Activated CD4-positive, alpha-beta memory T cell treated with anti-CD3 and anti-CD28 coated beads for 36 hours (primary cell): ENCODE measurements at regions of chr14 and their contacts with region 1.

Region 1: DNA sequence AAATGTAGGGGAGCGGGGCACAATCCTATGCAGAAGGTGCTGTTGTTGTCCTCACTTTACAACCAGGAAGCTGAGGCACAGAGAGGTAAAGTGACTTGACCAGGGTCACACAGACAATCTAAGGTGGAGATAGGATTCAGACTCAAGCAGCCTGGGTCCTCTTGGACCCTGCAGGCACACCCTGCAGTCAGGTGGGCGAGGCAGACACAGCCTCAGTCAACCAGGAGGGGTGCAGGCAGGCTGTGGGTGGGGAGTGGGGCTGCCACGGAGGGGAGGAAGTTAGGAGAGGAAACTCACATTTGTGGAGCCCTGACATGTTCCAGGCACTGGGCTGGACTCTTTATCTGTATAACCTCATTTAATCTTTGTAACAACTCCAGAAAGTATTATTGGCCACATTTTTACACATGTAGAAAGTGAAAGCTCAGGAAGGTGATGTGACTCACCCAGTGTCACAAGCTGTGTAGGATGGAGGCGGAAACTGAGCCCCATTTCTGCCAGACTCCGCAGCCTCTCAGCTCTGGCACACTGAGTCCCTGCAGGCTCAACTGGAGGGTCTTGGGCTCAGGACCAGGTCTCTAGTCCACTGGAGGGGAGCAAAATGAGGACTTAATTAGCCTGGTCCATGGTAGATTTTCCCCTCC is 24.9 kb upstream of the CHGA start:
- DNase-seq: peak; percentile 73
- H3K4me3 Mint-ChIP-seq: peak overlapping the region; percentile 45
- H3K27ac Mint-ChIP-seq: no peak overlapping the region
- H3K4me1 Mint-ChIP-seq: peaks cover 31% of the 10 kb centered on the region
- H3K27me3 Mint-ChIP-seq: peaks cover 12% of the 10 kb centered on the region

Region 2: GRCh38 chr14:92846162-92846897 is 51.7 kb before region 1 on chr14:
- CTCF ChIA-PET with region 1: no interaction called
- POLR2A ChIA-PET with region 1: no interaction called
- intact Hi-C with region 1: loop called (anchors 1 kb)
- DNase-seq: peak; percentile 63
- H3K4me3 Mint-ChIP-seq: no peak overlapping the region
- H3K27ac Mint-ChIP-seq: peak overlapping the region; percentile 58
- H3K4me1 Mint-ChIP-seq: peaks cover 65% of the 10 kb centered on the region
- H3K27me3 Mint-ChIP-seq: no peaks in the 10 kb centered on the region

Region 3: DNA sequence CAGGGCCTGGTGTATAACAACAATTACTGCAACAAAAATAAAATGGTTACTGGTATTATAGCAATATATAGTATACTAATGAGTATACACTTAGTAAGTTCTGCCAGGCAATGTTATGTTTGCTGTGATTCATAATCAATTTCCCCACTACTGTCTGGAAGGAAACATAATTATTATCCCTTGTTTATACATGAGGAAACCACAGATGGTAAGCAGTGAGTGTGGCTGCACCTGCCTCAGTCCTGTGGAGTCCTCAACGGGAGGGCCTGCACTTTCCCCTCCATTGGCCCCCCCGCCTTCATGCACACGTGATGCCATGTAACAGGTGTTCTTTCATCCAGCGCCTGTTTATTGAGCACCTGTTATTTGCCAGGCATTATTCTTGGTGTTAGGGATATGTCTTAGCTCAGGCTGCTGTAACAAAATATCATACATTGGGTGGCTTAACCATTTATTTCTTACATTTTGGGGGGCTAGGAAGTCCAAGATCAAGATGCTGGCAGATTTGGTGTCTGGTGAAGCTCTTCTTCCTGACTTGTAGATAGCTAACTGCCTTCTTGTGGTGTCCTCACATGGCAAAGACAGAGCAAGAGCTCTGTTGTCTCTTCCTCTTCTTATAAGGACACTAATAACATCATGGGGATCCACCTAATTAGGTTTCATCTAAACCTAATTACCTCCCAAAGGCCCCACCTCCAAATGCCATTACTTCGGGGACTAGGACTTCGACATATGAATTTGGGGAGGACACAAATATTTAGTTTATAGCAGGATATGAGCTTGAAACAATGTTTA is 34.6 kb before region 1 on chr14:
- CTCF ChIA-PET with region 1: no interaction called
- POLR2A ChIA-PET with region 1: no interaction called
- intact Hi-C with region 1: no loop called
- DNase-seq: no peak
- H3K4me3 Mint-ChIP-seq: no peak overlapping the region
- H3K27ac Mint-ChIP-seq: no peak overlapping the region
- H3K4me1 Mint-ChIP-seq: no peaks in the 10 kb centered on the region
- H3K27me3 Mint-ChIP-seq: peaks cover 6% of the 10 kb centered on the region